Ascending aorta (tissue), 2 donors: ENCODE measurements at regions of chr11 and their contacts with region 1.

Region 1: DNA sequence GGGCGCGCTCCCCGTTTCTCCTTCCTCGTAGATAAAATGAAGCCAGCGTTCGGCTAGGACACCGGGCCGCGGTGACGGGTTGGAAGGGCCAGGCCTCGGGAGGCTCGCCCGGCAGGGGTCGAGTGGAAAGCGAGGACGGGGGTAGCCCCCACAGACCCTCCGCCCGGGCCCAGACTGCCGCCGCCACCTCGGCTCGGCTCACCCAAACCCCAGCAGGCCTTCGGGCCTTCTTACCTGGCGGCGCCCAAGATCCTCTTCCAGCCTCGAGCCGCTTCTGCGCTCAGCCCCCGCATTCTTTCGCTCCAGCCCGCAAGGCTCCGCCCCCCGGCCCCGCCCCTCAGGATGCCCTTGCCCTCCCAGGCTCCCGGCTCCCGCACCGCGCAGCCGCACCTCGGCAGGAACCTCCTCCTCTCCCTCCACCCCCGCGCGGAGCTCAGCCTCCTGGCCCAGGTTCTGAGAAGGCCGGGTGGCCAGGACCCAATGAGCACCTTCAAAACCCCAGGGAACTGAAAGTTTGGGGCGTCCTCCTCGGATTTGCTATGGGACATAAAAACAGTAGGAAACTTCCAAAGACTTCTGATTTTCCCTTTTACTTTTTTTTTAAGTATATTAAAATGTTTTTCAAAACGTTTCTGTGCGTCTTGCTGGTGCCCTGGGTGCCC is at the start of gene CD59:
- DNase-seq: peak; percentile 84 to 97
- H3K4me3 ChIP-seq: peak within 1 kb of the TSS; percentile 89 to 95
- H3K27ac ChIP-seq: peak within 1 kb of the TSS; percentile 92 to 93
- H3K4me1 ChIP-seq: no peaks in the 10 kb centered on the region
- H3K27me3 ChIP-seq: no peaks in the 10 kb centered on the region
- CTCF ChIP-seq: no peak
- total RNA-seq, gene CD59: 637 TPM

Region 2: GRCh38 chr11:33700425-33701271 is 35.6 kb before region 1 on chr11 and contains the start of gene C11orf91:
- intact Hi-C with region 1: loop called (anchors 2 kb)
- DNase-seq: peak; percentile 72 to 96
- H3K4me3 ChIP-seq: peak within 1 kb of the TSS; percentile 67 to 72
- H3K27ac ChIP-seq: peak within 1 kb of the TSS; percentile 58 to 67
- H3K4me1 ChIP-seq: peaks cover 0 to 10% of the 10 kb centered on the region in 2 donors
- H3K27me3 ChIP-seq: no peaks in the 10 kb centered on the region
- CTCF ChIP-seq: no peak
- total RNA-seq, gene C11orf91: not detected

Region 3: DNA sequence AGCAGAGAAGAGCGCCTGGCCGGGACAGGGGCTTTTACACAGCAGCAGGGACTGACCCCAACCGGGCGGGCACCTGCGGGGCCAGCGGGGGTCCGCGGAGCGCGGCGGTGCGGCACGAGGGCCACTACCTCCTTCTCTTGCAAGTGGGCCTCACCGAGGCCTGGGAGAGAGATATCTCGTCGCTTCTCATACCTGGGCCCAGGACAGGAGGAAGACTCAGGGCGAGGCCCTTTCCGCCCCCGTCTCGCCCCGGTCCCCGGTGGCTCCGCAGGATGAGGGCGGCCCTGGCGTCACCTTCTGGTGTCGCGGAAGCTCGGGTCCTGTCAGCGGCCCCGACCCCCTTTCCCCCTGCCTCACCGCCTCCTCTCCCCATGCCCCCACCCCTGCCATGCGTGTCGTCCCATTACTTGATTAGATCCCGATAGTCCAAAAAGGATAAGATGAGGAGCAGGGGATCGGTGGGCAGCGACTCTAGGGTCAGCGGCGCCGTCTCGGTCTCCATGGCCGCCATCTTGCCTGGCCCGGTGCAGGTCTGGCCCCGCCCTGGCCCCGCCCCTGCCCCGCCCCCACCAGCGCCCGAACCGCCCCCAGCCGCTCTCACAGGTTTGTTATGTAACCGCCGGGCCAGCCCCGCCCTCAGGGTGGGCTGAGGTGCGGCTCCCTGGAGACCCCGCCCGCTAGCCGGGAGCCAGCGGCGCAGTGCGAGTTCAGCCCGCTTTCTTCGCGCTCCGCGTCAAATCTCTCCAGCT is 37.9 kb after region 1 on chr11 and contains the start of gene FBXO3:
- intact Hi-C with region 1: loop called (anchors 2 kb)
- DNase-seq: peak; percentile 61 to 93
- H3K4me3 ChIP-seq: peak within 1 kb of the TSS; percentile 85 to 90
- H3K27ac ChIP-seq: peak within 1 kb of the TSS; percentile 87 to 89
- H3K4me1 ChIP-seq: peaks cover 7 to 26% of the 10 kb centered on the region in 2 donors
- H3K27me3 ChIP-seq: no peaks in the 10 kb centered on the region
- CTCF ChIP-seq: no peak
- total RNA-seq, gene FBXO3: 11.8 TPM

Region 4: GRCh38 chr11:33930317-33931021 is 194.2 kb after region 1 on chr11:
- intact Hi-C with region 1: no loop called
- DNase-seq: peak in 1 of 2 donors; percentile 76
- H3K4me3 ChIP-seq: no peak overlapping the region
- H3K27ac ChIP-seq: peak overlapping the region; percentile 65 to 70
- H3K4me1 ChIP-seq: peaks cover 4 to 32% of the 10 kb centered on the region in 2 donors
- H3K27me3 ChIP-seq: no peaks in the 10 kb centered on the region
- CTCF ChIP-seq: no peak